Heart right ventricle (tissue), 16 donors: ENCODE measurements at regions of chr7 and their contacts with region 1.

Region 1: GRCh38 chr7:14761510-14762296 is 140.8 kb downstream of the DGKB start:
- DNase-seq: peak; percentile 73 to 83
- ATAC-seq: peak; percentile 90 to 100 (median 98)
- H3K4me3 ChIP-seq: no peak overlapping the region
- H3K27ac ChIP-seq: peak overlapping the region in 8 of 10 donors; percentile 61 to 75 (median 69)
- H3K4me1 ChIP-seq: peaks cover 0 to 22% (median 17%) of the 10 kb centered on the region in 9 donors
- H3K27me3 ChIP-seq: no peaks in the 10 kb centered on the region
- CTCF ChIP-seq: no peak

Region 2: GRCh38 chr7:14691597-14692203 is 70.0 kb before region 1 on chr7:
- intact Hi-C with region 1: no loop called
- DNase-seq: peak; percentile 20 to 38
- ATAC-seq: no peak
- H3K4me3 ChIP-seq: no peak overlapping the region
- H3K27ac ChIP-seq: no peak overlapping the region
- H3K4me1 ChIP-seq: peaks cover 0 to 20% (median 0%) of the 10 kb centered on the region in 9 donors
- H3K27me3 ChIP-seq: no peaks in the 10 kb centered on the region
- CTCF ChIP-seq: peak; percentile 63 to 91 (median 87)

Region 3: GRCh38 chr7:14836571-14837189 is 75.0 kb after region 1 on chr7:
- intact Hi-C with region 1: loop called in 2 of 10 experiments (anchors 5 kb)
- DNase-seq: peak; percentile 38 to 39
- ATAC-seq: peak; percentile 78 to 94 (median 92)
- H3K4me3 ChIP-seq: peak overlapping the region in 1 of 10 donors; percentile 2
- H3K27ac ChIP-seq: peak overlapping the region in 9 of 10 donors; percentile 45 to 84 (median 72)
- H3K4me1 ChIP-seq: peaks cover 0 to 51% (median 20%) of the 10 kb centered on the region in 9 donors
- H3K27me3 ChIP-seq: no peaks in the 10 kb centered on the region
- CTCF ChIP-seq: no peak

Region 4: DNA sequence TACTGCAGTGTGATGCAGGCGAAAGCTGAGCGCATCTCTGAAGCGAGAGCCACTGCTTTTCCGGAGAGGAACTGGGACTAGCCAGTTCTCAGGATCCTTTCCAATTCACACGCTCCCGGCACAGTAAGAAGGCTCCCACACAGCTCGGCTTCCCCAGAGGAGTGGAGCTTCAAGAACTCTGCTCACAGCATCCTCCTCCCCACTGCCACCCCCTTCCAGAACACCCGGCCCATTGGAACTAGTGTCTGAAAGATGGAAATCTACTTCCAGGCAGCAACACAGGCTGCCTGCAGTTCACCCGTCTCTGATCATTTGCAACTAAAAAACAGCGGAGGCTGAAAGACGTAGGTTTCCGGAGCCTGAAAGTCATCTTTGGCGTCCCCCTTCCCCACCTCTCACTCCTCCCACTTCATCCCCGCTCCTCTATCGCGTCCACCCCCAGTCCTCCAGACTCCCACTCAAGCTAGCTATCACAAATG is 140.9 kb after region 1 on chr7 and contains the start of gene DGKB:
- intact Hi-C with region 1: loop called in 1 of 10 experiments (anchors 5 kb)
- DNase-seq: peak; percentile 19 to 38
- ATAC-seq: peak; percentile 64 to 90 (median 80)
- H3K4me3 ChIP-seq: peak within 1 kb of the TSS in 9 of 10 donors; percentile 23 to 53 (median 46)
- H3K27ac ChIP-seq: peak within 1 kb of the TSS in 5 of 10 donors; percentile 13 to 41 (median 28)
- H3K4me1 ChIP-seq: peaks cover 0 to 13% (median 0%) of the 10 kb centered on the region in 9 donors
- H3K27me3 ChIP-seq: peaks cover 0 to 10% (median 0%) of the 10 kb centered on the region in 7 donors
- CTCF ChIP-seq: no peak
- total RNA-seq, gene DGKB: 0.17 to 1.2 (median 0.79) TPM